A673 (cell line): ENCODE measurements at regions of chr9 and their contacts with region 1.

Region 1: GRCh38 chr9:134067904-134068743 is at the start of gene BRD3:
- DNase-seq: peak; percentile 97
- H3K4me3 ChIP-seq: peak within 1 kb of the TSS; percentile 99
- H3K27ac ChIP-seq: peak within 1 kb of the TSS; percentile 94
- H3K4me1 ChIP-seq: no peaks in the 10 kb centered on the region
- H3K27me3 ChIP-seq: peaks cover 15% of the 10 kb centered on the region
- CTCF ChIP-seq: no peak
- total RNA-seq, gene BRD3: 61.6 and 72.7 TPM in 2 replicates

Region 2: DNA sequence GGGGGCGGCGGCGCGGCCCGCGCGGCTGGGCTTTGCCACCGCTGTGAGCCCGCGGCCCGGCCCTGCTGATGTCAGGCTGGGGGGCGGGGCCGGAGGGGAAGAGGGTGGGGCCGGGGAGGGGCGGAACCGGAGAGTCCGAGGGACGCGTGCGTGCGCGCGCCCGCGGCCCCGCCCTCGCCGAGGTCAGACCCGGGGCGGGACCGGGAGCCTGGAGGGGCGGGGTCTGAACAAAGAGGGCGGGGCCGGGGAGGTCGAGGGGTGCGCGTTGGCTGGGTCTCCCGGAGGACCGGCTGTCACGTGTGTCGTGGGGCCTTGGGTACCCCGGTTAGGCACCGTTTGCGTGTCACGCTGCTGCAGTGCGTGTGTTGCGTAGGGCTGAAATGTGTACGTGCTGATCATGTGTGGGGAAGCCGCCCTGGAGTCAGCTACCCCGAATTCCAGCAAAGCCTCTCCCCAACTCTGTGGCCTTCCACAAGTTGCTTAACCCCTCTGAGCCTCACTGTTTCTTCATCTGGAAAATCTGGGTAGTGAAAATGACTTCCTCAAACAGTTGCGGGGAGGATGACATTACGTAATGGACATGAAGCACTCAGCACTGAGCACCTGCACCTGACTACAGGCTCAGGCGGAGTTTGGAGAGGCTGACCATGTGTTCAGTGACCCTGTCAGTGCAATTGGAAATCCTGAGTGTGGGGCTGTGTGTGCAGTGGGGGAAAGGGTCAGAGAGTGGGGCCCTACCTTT is 946.8 kb before region 1 on chr9 and contains the start of gene RALGDS:
- CTCF ChIA-PET with region 1: no interaction called
- POLR2A ChIA-PET with region 1: no interaction called
- intact Hi-C with region 1: loop called (anchors 10 kb)
- DNase-seq: peak; percentile 91
- H3K4me3 ChIP-seq: peak within 1 kb of the TSS; percentile 65
- H3K27ac ChIP-seq: peak within 1 kb of the TSS; percentile 80
- H3K4me1 ChIP-seq: peaks cover 18% of the 10 kb centered on the region
- H3K27me3 ChIP-seq: no peaks in the 10 kb centered on the region
- CTCF ChIP-seq: no peak
- total RNA-seq, gene RALGDS: 40.1 and 42.3 TPM in 2 replicates

Region 3: DNA sequence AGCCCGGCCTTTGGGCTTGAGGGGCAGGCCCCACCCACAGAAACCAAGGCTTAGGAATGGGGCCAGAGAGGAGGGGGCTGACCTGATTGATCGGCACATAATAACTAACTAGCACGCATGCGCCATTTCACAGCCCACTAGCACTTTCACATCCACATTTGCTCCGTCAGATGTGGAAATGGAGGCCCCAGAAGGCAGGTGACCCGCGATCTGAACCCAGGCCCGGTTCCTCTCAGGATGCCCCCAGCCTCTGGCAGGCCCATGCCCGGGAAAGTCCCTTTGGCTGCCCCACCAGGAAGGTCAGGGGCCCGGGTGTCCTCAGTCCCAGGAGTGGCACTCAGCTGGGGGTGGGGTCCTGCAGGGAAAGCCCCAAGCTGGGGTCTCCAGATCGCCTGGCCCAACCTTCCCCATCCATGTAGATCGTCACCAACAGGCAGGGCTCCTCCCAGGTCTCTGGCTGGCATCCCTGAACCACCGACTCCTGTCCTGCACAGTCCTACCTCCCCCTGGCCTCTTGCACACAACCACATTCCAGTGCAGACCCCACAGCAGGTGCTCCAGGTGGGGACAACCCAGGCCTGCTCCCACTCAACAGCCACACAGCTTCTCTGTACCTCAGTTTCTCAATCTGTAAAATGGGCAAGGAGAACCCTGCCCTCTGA is 122.7 kb before region 1 on chr9:
- CTCF ChIA-PET with region 1: no interaction called
- POLR2A ChIA-PET with region 1: no interaction called
- intact Hi-C with region 1: no loop called
- DNase-seq: no peak
- H3K4me3 ChIP-seq: no peak overlapping the region
- H3K27ac ChIP-seq: no peak overlapping the region
- H3K4me1 ChIP-seq: no peaks in the 10 kb centered on the region
- H3K27me3 ChIP-seq: no peaks in the 10 kb centered on the region
- CTCF ChIP-seq: no peak

Region 4: GRCh38 chr9:134024828-134025605 is 43.1 kb before region 1 on chr9 and contains the start of gene BRD3OS:
- CTCF ChIA-PET with region 1: no interaction called
- POLR2A ChIA-PET with region 1: no interaction called
- intact Hi-C with region 1: loop called (anchors 2 kb)
- DNase-seq: peak; percentile 99
- H3K4me3 ChIP-seq: peak within 1 kb of the TSS; percentile 92
- H3K27ac ChIP-seq: peak within 1 kb of the TSS; percentile 63
- H3K4me1 ChIP-seq: no peaks in the 10 kb centered on the region
- H3K27me3 ChIP-seq: no peaks in the 10 kb centered on the region
- CTCF ChIP-seq: no peak
- total RNA-seq, gene BRD3OS: 13.5 and 22.2 TPM in 2 replicates